Right cardiac atrium (tissue), 5 donors: ENCODE measurements at regions of chr7 and their contacts with region 1.

Region 1: GRCh38 chr7:24812310-24812945 is 55.2 kb upstream of the GSDME start:
- DNase-seq: peak; percentile 35 to 71 (median 63)
- ATAC-seq: peak; percentile 83 to 86
- H3K4me3 ChIP-seq: no peak overlapping the region
- H3K27ac ChIP-seq: no peak overlapping the region
- H3K4me1 ChIP-seq: no peaks in the 10 kb centered on the region
- H3K27me3 ChIP-seq: no peaks in the 10 kb centered on the region

Region 2: GRCh38 chr7:24722386-24723177 is 89.8 kb before region 1 on chr7:
- intact Hi-C with region 1: no loop called
- DNase-seq: no peak
- ATAC-seq: peak in 1 of 2 donors; percentile 41
- H3K4me3 ChIP-seq: no peak overlapping the region
- H3K27ac ChIP-seq: no peak overlapping the region
- H3K4me1 ChIP-seq: peaks cover 2% of the 10 kb centered on the region
- H3K27me3 ChIP-seq: no peaks in the 10 kb centered on the region

Region 3: DNA sequence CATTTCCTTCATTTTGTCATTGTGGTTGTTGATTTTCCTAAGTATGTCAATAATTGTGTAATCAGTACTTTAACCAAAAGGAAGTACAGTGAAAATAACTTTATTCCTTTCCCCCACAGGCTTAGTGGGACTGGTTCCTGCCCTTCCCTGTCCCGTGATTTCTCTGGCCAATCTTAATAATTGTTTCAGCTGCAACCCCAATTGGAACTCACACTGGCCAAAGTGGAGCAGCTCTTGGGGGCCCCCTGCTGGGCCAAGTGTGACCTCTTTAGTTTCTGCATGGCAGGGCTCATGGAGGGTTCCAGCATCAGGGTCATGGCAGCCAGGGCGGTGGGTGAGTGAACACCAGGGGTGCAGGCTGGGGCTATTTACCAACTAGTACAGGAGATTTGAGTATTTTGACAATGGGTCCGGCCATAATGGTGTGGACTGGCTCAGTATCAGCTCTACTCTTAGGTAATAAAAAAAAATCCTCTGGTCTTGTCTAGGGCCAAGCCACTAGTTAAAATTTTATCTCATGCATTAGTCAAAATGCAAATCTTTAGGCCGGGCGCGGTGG is 280.9 kb after region 1 on chr7:
- intact Hi-C with region 1: loop called in 3 of 4 experiments (anchors 5 to 10 kb)
- DNase-seq: peak; percentile 69 to 87 (median 85)
- ATAC-seq: peak; percentile 83 to 84
- H3K4me3 ChIP-seq: no peak overlapping the region
- H3K27ac ChIP-seq: no peak overlapping the region
- H3K4me1 ChIP-seq: peaks cover 1% of the 10 kb centered on the region
- H3K27me3 ChIP-seq: no peaks in the 10 kb centered on the region

Region 4: DNA sequence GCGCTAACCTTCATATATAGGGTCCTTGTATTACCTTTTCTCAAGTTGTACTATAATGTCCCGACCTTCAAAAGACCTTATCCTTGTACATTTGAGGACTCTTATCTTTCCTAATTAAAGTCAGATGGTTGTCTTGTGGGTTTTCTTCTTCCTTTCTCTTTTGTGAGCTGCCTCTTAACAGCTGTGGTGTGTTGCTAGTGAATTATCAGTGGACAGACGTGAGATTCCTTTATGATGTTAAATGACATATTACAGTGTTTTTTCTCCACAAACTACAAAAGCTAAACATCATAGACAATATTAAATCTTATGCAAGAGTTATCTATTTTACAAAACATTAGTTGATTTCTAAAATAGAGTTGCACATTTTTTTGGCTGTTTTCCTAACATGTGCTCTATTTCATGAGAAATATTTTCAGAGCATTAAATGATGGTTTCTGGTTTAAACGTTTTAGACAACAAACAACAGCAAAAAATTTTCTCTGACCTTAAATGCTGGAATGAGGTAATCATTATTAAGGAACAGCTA is 688.0 kb after region 1 on chr7:
- intact Hi-C with region 1: no loop called
- DNase-seq: no peak
- ATAC-seq: no peak
- H3K4me3 ChIP-seq: no peak overlapping the region
- H3K27ac ChIP-seq: no peak overlapping the region
- H3K4me1 ChIP-seq: no peaks in the 10 kb centered on the region
- H3K27me3 ChIP-seq: no peaks in the 10 kb centered on the region

Region 5: DNA sequence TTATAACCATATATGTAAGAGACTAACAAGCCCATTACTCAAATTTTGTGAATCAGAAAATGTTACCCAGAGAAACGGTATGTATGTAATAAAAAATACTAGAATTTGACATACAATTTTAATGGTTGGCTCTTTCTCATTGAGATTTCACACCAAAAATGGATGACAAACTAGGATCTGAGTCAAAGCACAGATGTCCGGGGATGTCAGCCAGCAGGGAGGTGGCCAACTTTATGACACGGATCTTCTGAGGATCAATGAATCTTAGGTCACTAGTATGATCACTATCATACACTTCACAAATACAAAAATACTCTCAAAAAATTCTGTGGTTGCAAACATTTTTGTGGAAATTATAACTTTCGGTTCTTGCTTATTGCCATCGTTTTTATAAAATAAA is 1166.0 kb after region 1 on chr7:
- intact Hi-C with region 1: no loop called
- DNase-seq: no peak
- ATAC-seq: no peak
- H3K4me3 ChIP-seq: no peak overlapping the region
- H3K27ac ChIP-seq: no peak overlapping the region
- H3K4me1 ChIP-seq: no peaks in the 10 kb centered on the region
- H3K27me3 ChIP-seq: no peaks in the 10 kb centered on the region